CD8-positive, alpha-beta T cell (primary cell): ENCODE measurements at regions of chr2 and their contacts with region 1.

Region 1: GRCh38 chr2:25710750-25711149 is 37.4 kb upstream of the DTNB start:
- DNase-seq: no peak
- ATAC-seq: no peak
- H3K4me3 ChIP-seq: no peak overlapping the region
- H3K4me3 Mint-ChIP-seq: no peak overlapping the region
- H3K27ac ChIP-seq: no peak overlapping the region
- H3K27ac Mint-ChIP-seq: no peak overlapping the region
- H3K4me1 ChIP-seq: no peaks in the 10 kb centered on the region
- H3K4me1 Mint-ChIP-seq: peaks cover 11% of the 10 kb centered on the region
- H3K27me3 ChIP-seq: peaks cover 0 to 5% of the 10 kb centered on the region in 2 experiments
- H3K27me3 Mint-ChIP-seq: peaks cover 19% of the 10 kb centered on the region
- CTCF ChIP-seq: no peak

Region 2: GRCh38 chr2:24024018-24024417 is 1686.7 kb before region 1 on chr2:
- CTCF ChIA-PET with region 1: no interaction called
- POLR2A ChIA-PET with region 1: no interaction called
- intact Hi-C with region 1: no loop called
- DNase-seq: no peak
- ATAC-seq: no peak
- H3K4me3 ChIP-seq: no peak overlapping the region
- H3K4me3 Mint-ChIP-seq: no peak overlapping the region
- H3K27ac ChIP-seq: no peak overlapping the region
- H3K27ac Mint-ChIP-seq: no peak overlapping the region
- H3K4me1 ChIP-seq: no peaks in the 10 kb centered on the region
- H3K4me1 Mint-ChIP-seq: no peaks in the 10 kb centered on the region
- H3K27me3 ChIP-seq: no peaks in the 10 kb centered on the region
- H3K27me3 Mint-ChIP-seq: no peaks in the 10 kb centered on the region
- CTCF ChIP-seq: no peak

Region 3: DNA sequence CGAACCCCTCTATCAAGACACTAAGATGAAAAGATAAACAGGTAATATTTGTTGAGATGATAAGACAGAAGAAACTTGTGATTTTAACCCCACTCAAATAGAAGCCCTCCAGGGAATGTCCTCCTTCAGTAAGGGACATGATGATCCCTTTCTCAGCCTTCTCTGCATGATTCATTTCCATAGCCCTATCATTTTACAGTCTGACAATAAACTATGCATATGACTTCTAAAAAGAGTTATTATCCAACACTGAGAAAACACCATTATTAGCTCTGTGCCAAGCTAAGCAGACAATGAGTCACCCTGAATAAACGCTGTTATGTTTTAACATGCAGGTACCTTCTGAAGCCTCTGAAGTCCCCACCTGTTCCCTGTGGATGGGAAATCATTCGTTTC is 92.1 kb before region 1 on chr2:
- CTCF ChIA-PET with region 1: no interaction called
- POLR2A ChIA-PET with region 1: no interaction called
- intact Hi-C with region 1: no loop called
- DNase-seq: no peak
- ATAC-seq: no peak
- H3K4me3 ChIP-seq: no peak overlapping the region
- H3K4me3 Mint-ChIP-seq: no peak overlapping the region
- H3K27ac ChIP-seq: no peak overlapping the region
- H3K27ac Mint-ChIP-seq: no peak overlapping the region
- H3K4me1 ChIP-seq: no peaks in the 10 kb centered on the region
- H3K4me1 Mint-ChIP-seq: no peaks in the 10 kb centered on the region
- H3K27me3 ChIP-seq: no peaks in the 10 kb centered on the region
- H3K27me3 Mint-ChIP-seq: no peaks in the 10 kb centered on the region
- CTCF ChIP-seq: no peak

Region 4: DNA sequence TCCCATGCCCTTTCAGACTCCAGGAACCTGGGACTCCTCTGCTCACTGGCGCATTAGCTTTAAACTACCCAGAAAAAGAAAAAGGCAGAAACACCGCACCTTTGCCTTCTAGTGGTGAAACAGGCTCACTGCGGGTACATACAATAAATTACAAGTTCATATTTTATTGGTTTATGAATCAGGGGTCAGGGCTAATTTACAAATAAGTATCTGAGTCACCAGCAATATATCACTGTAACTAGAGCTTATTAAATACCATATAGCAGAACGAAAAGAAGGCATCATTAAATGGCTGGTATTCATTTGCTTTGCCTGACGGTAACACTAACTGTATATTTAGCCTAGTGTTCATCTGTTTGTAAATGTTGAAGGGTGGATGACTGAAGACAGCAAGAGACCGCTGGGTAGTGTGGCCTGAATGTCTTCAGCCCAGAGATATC is 10.5 kb before region 1 on chr2:
- CTCF ChIA-PET with region 1: interaction called, 15 read pairs
- POLR2A ChIA-PET with region 1: interaction called, 3 read pairs
- intact Hi-C with region 1: no loop called
- DNase-seq: peak in 5 of 9 experiments; percentile 7 to 52 (median 28)
- ATAC-seq: peak; percentile 69
- H3K4me3 ChIP-seq: no peak overlapping the region
- H3K4me3 Mint-ChIP-seq: no peak overlapping the region
- H3K27ac ChIP-seq: no peak overlapping the region
- H3K27ac Mint-ChIP-seq: no peak overlapping the region
- H3K4me1 ChIP-seq: no peaks in the 10 kb centered on the region
- H3K4me1 Mint-ChIP-seq: peaks cover 3% of the 10 kb centered on the region
- H3K27me3 ChIP-seq: no peaks in the 10 kb centered on the region
- H3K27me3 Mint-ChIP-seq: no peaks in the 10 kb centered on the region
- CTCF ChIP-seq: peak; percentile 76